Cardiac septum (tissue), 1 donor: ENCODE measurements at regions of chr16 and their contacts with region 1.

Region 1: GRCh38 chr16:11407047-11407982 is 62.1 kb downstream of the RMI2 start:
- DNase-seq: no peak

Region 2: GRCh38 chr16:11506741-11507305 is 99.5 kb after region 1 on chr16:
- intact Hi-C with region 1: loop called (anchors 10 kb)
- DNase-seq: no peak

Region 3: DNA sequence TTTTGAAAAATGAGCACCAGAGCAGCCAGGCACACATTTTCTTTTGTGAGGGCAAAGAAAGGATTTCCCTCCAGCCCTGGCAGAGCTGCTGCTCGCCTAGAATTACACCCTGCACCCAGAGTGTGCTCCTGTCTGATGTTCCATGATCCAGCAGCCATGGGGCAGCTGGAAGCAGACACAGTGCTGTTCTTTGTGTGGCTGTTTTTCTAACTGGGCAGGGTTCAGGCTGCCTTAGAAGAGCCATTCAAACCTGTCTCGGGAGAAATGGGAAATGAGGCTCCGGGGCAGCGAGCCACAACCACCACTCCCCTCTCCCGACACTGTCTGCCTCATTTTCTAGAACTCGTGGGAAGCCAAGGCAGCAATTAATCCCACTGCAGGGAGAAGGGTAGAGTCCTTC is 150.5 kb after region 1 on chr16:
- intact Hi-C with region 1: no loop called
- DNase-seq: no peak